Transverse colon (tissue), 4 donors: ENCODE measurements at regions of chr1 and their contacts with region 1.

Region 1: DNA sequence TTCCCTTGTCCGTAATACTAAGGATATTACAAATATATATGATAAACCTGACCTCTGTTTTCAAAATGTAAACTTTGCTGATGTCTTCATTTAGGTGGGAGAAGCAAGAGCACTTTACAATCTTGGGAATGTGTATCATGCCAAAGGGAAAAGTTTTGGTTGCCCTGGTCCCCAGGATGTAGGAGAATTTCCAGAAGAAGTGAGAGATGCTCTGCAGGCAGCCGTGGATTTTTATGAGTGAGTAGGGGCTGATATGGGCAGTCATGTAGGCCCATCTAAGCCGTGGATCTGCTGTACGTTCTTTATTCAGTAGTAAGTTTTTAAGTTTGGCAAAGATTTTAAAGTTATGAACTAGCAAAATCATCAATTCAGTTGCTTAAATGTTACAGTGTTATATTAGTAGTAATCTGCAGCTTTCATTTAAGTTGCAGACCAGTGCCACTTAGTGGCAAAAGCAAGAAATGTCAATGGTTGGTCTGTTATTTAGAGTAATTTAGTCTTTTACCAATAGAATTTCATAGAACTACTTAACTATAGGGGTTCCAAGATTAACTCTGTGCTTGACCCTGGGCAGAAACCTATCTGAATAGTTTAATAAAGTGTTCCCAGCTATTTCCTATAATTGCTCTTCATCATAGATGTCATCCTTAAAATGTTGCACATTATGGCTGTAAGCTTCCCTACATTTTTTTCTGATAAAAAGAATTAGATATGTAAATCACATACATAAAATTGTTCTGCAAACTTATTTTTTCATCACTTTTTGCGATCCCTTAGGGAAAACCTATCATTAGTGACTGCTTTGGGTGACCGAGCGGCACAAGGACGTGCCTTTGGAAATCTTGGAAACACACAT is 21.3 kb downstream of the GPSM2 start:
- DNase-seq: peak; percentile 16
- H3K4me3 ChIP-seq: no peak overlapping the region
- H3K27ac ChIP-seq: peak overlapping the region in 1 of 4 donors; percentile 3
- H3K4me1 ChIP-seq: peaks cover 0 to 16% (median 0%) of the 10 kb centered on the region in 4 donors
- H3K27me3 ChIP-seq: no peaks in the 10 kb centered on the region
- CTCF ChIP-seq: peak; percentile 62 to 77 (median 73)
- EP300 ChIP-seq: no peak
- POLR2A ChIP-seq: no peak

Region 2: DNA sequence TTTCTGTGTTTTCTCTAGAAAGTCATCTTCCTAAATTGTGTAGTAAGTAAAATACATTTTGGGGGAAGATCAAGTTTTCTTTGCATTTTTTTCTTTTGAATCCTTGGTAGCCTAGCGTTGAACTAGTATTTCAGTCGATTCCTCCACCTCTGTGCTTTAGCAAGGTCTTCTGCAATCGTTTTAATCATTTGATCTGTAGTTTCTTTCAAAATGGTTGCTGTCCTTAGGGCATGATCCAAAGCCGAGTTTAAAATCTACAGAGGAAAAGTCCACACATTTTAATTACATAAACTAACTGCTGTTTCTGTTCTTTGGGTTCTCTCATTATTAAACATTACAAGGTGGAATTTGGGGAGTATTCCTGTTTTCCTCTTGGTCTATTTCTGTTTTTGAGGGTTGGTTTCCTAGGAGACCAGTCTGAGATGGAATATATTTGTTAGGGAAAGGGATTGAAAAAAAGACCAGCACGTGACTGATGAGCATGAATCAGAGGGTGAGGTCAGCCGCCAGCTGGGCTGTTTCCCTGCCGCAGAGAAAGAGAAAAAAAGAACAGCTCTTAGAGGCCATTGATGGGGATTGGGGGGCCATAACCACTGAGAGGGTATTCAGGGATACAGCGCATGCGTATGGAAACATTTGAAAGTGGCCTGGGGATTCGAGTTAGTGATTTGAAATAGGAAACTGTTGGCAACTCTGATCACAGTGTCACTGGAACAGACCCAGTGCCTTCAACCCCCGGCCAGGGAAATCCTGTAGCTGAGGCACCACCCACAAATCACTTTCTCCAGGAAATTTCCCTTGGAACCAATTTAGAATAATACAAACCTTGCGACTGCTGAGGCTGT is 81.8 kb before region 1 on chr1:
- in situ Hi-C with region 1: loop called in 1 of 4 experiments (anchors 5 kb)
- intact Hi-C with region 1: no loop called
- DNase-seq: peak; percentile 56
- H3K4me3 ChIP-seq: peak overlapping the region in 2 of 4 donors; percentile 14 to 33
- H3K27ac ChIP-seq: peak overlapping the region; percentile 81 to 83 (median 82)
- H3K4me1 ChIP-seq: peaks cover 11 to 32% (median 23%) of the 10 kb centered on the region in 4 donors
- H3K27me3 ChIP-seq: no peaks in the 10 kb centered on the region
- CTCF ChIP-seq: no peak
- EP300 ChIP-seq: no peak
- POLR2A ChIP-seq: no peak

Region 3: GRCh38 chr1:108828022-108828961 is 69.8 kb before region 1 on chr1:
- in situ Hi-C with region 1: loop called in 2 of 4 experiments (anchors 5 to 10 kb)
- intact Hi-C with region 1: loop called (anchors 2 kb)
- DNase-seq: peak; percentile 84
- H3K4me3 ChIP-seq: no peak overlapping the region
- H3K27ac ChIP-seq: peak overlapping the region; percentile 76 to 89 (median 76)
- H3K4me1 ChIP-seq: peaks cover 0 to 36% (median 11%) of the 10 kb centered on the region in 4 donors
- H3K27me3 ChIP-seq: no peaks in the 10 kb centered on the region
- CTCF ChIP-seq: peak; percentile 73 to 83 (median 81)
- EP300 ChIP-seq: no peak
- POLR2A ChIP-seq: no peak

Region 4: GRCh38 chr1:108963052-108963686 is 65.1 kb after region 1 on chr1 and contains the start of gene CLCC1:
- in situ Hi-C with region 1: loop called in 1 of 4 experiments (anchors 10 kb)
- intact Hi-C with region 1: no loop called
- DNase-seq: peak; percentile 97
- H3K4me3 ChIP-seq: peak within 1 kb of the TSS; percentile 46 to 70 (median 60)
- H3K27ac ChIP-seq: peak within 1 kb of the TSS; percentile 95 to 98 (median 96)
- H3K4me1 ChIP-seq: peaks cover 4 to 24% (median 13%) of the 10 kb centered on the region in 4 donors
- H3K27me3 ChIP-seq: no peaks in the 10 kb centered on the region
- CTCF ChIP-seq: peak in 1 of 5 experiments; percentile 28
- EP300 ChIP-seq: peak; percentile 27
- POLR2A ChIP-seq: peak; percentile 92
- total RNA-seq, gene CLCC1: 13.0 to 21.9 (median 18.2) TPM